ENCODE measurements at regions of chr19 and their contacts with region 1.

Region 1: DNA sequence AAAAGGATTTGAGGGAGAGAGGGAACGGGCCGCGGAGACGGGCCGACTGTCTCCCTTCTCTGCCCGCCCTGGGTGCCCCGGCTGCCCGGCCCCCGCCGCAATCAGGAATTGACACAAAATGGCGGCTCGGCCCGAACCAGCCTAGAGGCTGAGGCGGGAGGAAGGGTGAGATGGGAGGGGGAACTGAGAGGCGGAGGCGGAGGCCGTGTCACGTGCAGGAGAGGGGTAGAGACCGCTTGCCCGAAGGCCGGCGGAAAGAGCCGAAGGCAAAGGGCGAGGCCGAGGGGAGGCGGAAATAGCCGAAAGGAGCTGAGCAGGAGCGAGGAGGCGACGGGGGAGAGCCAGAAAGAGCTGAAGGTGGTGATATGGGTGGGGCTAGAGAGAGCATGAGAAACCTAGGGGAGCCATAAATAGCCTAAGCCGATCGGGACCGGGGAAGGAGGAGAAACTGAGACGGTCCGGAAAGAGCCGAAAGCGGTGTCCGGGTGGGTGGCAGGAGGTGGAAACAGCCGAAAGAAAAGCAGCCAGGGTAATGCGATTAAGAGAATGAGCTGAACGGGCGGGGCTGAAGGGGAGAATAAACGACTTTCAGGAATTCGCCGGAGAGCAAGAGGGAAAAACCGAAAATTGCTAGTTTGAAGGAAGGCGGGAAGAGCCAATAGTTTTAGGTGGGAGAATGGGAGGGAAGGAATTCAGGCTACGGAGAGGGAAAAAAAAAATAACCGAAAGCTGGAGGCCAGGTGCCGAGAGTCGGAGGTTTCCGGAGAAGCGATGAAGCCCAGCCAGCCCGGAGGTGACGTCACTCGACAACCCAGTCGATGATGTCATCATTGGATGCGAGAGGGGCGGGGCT is at the start of gene ZC3H4:
- DNase-seq: peak; percentile 99 to 100 (median 99)
- H3K4me3 ChIP-seq: peak within 1 kb of the TSS; percentile 65 to 99 (median 82)
- H3K27ac ChIP-seq: peak within 1 kb of the TSS; percentile 97 to 100 (median 100)
- H3K4me1 ChIP-seq: peaks cover 0 to 21% of the 10 kb centered on the region in 2 donors
- H3K27me3 ChIP-seq: no peaks in the 10 kb centered on the region
- CTCF ChIP-seq: no peak
- POLR2A ChIP-seq: peak; percentile 42 to 90
- total RNA-seq, gene ZC3H4: 5.7 to 45.0 (median 23.7) TPM

Region 2: GRCh38 chr19:46990991-46991676 is 122.1 kb before region 1 on chr19:
- intact Hi-C with region 1: no loop called
- DNase-seq: peak; percentile 77 to 94 (median 86)
- H3K4me3 ChIP-seq: no peak overlapping the region
- H3K27ac ChIP-seq: peak overlapping the region in 3 of 5 donors; percentile 15 to 86 (median 86)
- H3K4me1 ChIP-seq: peaks cover 12 to 32% of the 10 kb centered on the region in 2 donors
- H3K27me3 ChIP-seq: no peaks in the 10 kb centered on the region
- CTCF ChIP-seq: peak; percentile 68 to 88 (median 82)
- POLR2A ChIP-seq: no peak

Region 3: GRCh38 chr19:47081111-47081510 is 32.1 kb before region 1 on chr19:
- intact Hi-C with region 1: loop called in 1 of 2 experiments (anchors 5 kb)
- DNase-seq: no peak
- H3K4me3 ChIP-seq: no peak overlapping the region
- H3K27ac ChIP-seq: no peak overlapping the region
- H3K4me1 ChIP-seq: peaks cover 0 to 8% of the 10 kb centered on the region in 2 donors
- H3K27me3 ChIP-seq: no peaks in the 10 kb centered on the region
- CTCF ChIP-seq: no peak
- POLR2A ChIP-seq: no peak

Measured in adrenal gland (tissue), 19 donors.